Activated naive CD8-positive, alpha-beta T cell treated with anti-CD3 and anti-CD28 coated beads, Interleukin-2, amount 10 ng/mL, durations not matched to agents 7 days and 5 days (primary cell): ENCODE measurements at regions of chr10 and their contacts with region 1.

Region 1: GRCh38 chr10:101042667-101043355 is 11.8 kb downstream of the SFXN3 start:
- DNase-seq: peak; percentile 86
- ATAC-seq: peak; percentile 86
- H3K4me3 Mint-ChIP-seq: peak overlapping the region; percentile 91
- H3K27ac Mint-ChIP-seq: peak overlapping the region; percentile 83
- H3K4me1 Mint-ChIP-seq: peaks cover 20% of the 10 kb centered on the region
- H3K27me3 Mint-ChIP-seq: peaks cover 41% of the 10 kb centered on the region

Region 2: DNA sequence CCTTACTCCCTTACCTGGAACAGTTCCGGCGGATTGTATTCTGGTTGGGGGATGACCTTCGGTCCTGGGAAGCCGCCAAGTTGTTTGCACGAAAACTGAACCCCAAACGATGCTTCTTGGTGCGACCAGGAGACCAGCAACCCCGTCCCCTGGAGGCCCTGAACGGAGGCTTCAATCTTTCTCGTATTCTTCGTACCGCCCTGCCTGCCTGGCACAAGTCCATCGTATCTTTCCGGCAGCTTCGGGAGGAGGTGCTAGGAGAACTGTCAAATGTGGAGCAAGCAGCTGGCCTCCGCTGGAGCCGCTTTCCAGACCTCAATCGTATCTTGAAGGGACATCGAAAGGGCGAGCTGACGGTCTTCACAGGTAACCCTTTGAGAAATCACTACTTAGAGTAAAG is 53.7 kb before region 1 on chr10:
- POLR2A ChIA-PET with region 1: no interaction called
- DNase-seq: no peak
- ATAC-seq: no peak
- H3K4me3 Mint-ChIP-seq: no peak overlapping the region
- H3K27ac Mint-ChIP-seq: no peak overlapping the region
- H3K4me1 Mint-ChIP-seq: peaks cover 18% of the 10 kb centered on the region
- H3K27me3 Mint-ChIP-seq: no peaks in the 10 kb centered on the region

Region 3: DNA sequence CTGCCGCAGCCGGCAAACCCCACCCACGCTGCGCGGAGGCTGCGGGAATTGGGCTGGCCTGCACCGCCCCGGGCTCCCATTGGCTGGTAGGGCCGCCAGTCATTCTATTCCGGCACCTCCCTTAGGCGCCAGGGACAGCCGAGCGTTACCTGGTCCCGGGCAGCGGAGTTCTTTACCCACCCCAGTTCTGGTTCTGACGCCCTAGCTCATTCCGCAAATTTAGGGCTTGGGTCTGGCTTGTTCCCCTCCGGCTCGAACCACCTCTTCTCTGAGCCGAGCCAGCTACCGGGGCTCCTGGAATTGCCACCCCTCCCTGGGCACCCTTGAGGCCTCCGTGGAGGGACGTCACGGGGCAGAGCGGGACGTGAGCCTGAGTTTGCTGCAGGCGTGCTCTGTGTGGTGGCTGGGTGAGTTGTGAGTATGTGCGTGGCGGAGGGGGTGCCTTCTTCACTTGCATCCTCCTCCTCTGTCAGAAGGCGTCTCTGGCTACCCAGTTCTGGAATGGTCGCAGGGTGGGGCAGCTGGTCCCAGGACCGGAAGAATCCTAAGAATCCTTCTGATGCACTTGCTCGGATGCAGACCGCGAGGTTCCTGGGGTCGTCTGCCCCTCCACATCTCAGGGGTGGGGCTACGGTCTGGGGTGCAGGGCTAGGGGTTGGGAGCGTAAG is 11.5 kb before region 1 on chr10 and contains the starts of genes PDZD7 and SFXN3:
- POLR2A ChIA-PET with region 1: interaction called, 33 read pairs
- DNase-seq: peak; percentile 98
- ATAC-seq: peak; percentile 88
- H3K4me3 Mint-ChIP-seq: peak within 1 kb of the TSS; percentile 87
- H3K27ac Mint-ChIP-seq: peak within 1 kb of the TSS; percentile 95
- H3K4me1 Mint-ChIP-seq: peaks cover 20% of the 10 kb centered on the region
- H3K27me3 Mint-ChIP-seq: peaks cover 10% of the 10 kb centered on the region
- total RNA-seq, gene PDZD7: 1.1 to 1.4 TPM
- total RNA-seq, gene SFXN3: 66.1 to 68.6 TPM

Region 4: DNA sequence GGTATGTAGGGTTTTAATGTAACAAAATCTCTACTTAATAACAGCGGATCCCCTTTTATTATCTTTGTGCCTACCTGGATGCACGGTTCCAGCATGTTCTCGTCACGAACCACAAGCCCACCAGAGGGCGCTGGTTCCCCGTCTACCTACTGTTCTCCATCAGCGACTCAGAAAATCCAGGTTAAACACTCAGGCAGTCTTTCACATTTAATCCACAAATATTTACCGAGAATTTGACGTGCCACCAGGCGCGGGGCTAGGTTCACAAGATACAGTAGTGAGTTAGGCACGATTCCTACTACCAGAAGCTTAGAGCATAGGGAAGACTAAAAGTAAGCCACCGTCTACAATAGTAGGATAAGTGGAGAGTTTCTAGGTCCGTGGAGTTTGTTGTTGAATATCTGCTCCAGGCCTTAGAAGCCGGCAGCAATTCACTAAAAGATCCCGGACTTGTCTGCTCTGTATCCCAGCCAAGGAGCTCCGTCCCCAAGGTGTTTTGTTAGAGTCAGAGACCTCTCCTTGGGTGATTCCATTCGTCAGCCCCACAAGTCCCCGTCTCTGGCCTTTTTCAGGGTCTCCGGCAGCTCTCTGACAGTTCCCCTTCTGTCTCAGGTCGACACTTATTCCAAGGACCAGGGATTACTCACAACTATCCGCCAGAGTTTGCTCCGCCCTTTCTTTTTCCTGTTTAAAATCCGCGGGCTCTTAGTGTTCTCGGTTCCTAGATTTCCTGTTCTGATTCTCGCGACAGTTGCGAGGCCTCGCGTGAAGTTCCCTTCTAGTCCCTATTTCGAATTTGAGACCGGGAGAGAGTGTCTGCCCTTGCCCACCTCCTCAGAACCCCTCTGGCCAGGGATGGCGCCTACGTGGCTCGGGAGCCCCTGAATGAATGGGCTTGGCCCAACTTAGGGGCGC is 17.5 kb after region 1 on chr10:
- POLR2A ChIA-PET with region 1: interaction called, 11 read pairs
- DNase-seq: peak; percentile 89
- ATAC-seq: peak; percentile 55
- H3K4me3 Mint-ChIP-seq: peak overlapping the region; percentile 93
- H3K27ac Mint-ChIP-seq: peak overlapping the region; percentile 82
- H3K4me1 Mint-ChIP-seq: peaks cover 34% of the 10 kb centered on the region
- H3K27me3 Mint-ChIP-seq: peaks cover 28% of the 10 kb centered on the region

Region 5: GRCh38 chr10:101161494-101162299 is 118.9 kb after region 1 on chr10:
- POLR2A ChIA-PET with region 1: no interaction called
- DNase-seq: peak; percentile 67
- ATAC-seq: peak; percentile 68
- H3K4me3 Mint-ChIP-seq: no peak overlapping the region
- H3K27ac Mint-ChIP-seq: no peak overlapping the region
- H3K4me1 Mint-ChIP-seq: peaks cover 10% of the 10 kb centered on the region
- H3K27me3 Mint-ChIP-seq: peaks cover 38% of the 10 kb centered on the region